ENCODE measurements at regions of chr3 and their contacts with region 1.

Region 1: DNA sequence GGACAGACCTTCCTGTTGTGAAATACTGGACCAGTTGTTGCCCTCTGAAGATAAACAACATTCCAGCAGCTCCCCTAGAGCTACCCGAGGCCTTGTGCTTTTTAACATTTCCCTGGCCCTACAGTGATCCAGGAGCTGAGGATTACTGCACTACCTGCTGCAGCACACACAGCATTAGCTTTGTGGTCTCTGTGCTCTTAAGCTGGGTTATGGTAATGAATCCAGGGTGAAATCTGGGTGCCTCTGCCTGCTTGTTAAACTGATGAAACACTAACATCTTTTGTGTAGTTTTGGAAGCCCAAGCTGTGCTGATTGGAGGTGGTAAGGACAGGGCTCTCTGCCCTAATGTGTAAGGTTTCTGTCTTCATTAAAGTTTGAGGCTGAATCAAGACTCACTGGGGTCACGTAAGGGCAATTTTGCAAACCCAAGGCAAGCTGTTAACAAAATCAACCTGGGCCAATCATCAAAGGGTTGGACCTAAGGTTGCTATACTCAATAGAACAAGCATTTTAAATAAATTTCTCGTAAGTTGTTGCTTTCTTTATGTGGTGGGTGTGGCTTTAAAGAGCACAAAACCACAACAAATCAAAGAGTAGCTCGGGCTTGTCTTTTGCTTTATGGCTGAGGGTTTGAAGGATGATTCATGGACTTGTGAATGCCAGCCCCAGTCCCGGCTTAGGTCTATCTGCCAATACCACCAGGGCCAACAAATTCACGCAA is 183.9 kb downstream of the TPRG1 start:
- DNase-seq: peak; percentile 93
- H3K4me3 Mint-ChIP-seq: no peak overlapping the region
- H3K27ac Mint-ChIP-seq: peak overlapping the region; percentile 96
- H3K4me1 Mint-ChIP-seq: peaks cover 36% of the 10 kb centered on the region
- H3K27me3 Mint-ChIP-seq: no peaks in the 10 kb centered on the region
- CTCF ChIP-seq: no peak

Region 2: GRCh38 chr3:189276481-189277219 is 79.0 kb before region 1 on chr3:
- CTCF ChIA-PET with region 1: interaction called, 56 read pairs
- POLR2A ChIA-PET with region 1: interaction called, 111 read pairs
- intact Hi-C with region 1: loop called (anchors 2 kb)
- DNase-seq: peak; percentile 95
- H3K4me3 Mint-ChIP-seq: peak overlapping the region; percentile 30
- H3K27ac Mint-ChIP-seq: peak overlapping the region; percentile 50
- H3K4me1 Mint-ChIP-seq: peaks cover 41% of the 10 kb centered on the region
- H3K27me3 Mint-ChIP-seq: no peaks in the 10 kb centered on the region
- CTCF ChIP-seq: no peak

Region 3: DNA sequence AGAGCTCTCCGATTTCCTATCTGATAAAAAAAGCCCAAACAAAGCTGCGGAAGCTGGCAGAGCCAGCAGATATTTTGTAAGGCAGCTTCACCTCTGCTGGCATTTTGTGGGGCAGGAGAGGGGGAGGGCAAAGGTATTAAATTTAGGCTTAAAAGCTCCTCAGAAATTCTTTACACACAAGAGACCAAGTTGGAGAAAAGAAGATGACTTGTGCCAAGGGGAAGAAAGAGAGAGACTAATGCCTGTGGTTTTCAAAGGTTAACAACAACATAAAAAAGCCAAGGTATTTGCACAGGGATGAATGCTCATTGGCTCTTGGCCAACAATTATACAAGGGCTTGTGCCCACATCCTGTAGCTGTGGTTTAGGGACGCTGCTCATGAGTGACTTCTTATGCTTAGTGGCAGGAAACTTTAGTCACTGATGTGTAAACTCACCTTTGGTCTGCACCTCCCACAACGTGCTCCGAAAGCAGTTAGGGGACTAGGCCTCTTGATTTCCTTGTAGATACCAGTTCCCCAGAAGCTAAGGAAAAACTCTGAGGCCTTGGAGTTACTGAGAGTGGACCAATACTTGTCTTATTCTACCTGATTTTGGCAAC is 31.0 kb before region 1 on chr3:
- CTCF ChIA-PET with region 1: interaction called, 4 read pairs
- POLR2A ChIA-PET with region 1: interaction called, 37 read pairs
- intact Hi-C with region 1: no loop called
- DNase-seq: peak; percentile 98
- H3K4me3 Mint-ChIP-seq: no peak overlapping the region
- H3K27ac Mint-ChIP-seq: peak overlapping the region; percentile 69
- H3K4me1 Mint-ChIP-seq: peaks cover 30% of the 10 kb centered on the region
- H3K27me3 Mint-ChIP-seq: no peaks in the 10 kb centered on the region
- CTCF ChIP-seq: no peak

Region 4: GRCh38 chr3:189458532-189458931 is 102.9 kb after region 1 on chr3:
- CTCF ChIA-PET with region 1: no interaction called
- POLR2A ChIA-PET with region 1: interaction called, 10 read pairs
- intact Hi-C with region 1: no loop called
- DNase-seq: peak; percentile 80
- H3K4me3 Mint-ChIP-seq: peak overlapping the region; percentile 26
- H3K27ac Mint-ChIP-seq: peak overlapping the region; percentile 70
- H3K4me1 Mint-ChIP-seq: peaks cover 29% of the 10 kb centered on the region
- H3K27me3 Mint-ChIP-seq: no peaks in the 10 kb centered on the region
- CTCF ChIP-seq: no peak

Region 5: DNA sequence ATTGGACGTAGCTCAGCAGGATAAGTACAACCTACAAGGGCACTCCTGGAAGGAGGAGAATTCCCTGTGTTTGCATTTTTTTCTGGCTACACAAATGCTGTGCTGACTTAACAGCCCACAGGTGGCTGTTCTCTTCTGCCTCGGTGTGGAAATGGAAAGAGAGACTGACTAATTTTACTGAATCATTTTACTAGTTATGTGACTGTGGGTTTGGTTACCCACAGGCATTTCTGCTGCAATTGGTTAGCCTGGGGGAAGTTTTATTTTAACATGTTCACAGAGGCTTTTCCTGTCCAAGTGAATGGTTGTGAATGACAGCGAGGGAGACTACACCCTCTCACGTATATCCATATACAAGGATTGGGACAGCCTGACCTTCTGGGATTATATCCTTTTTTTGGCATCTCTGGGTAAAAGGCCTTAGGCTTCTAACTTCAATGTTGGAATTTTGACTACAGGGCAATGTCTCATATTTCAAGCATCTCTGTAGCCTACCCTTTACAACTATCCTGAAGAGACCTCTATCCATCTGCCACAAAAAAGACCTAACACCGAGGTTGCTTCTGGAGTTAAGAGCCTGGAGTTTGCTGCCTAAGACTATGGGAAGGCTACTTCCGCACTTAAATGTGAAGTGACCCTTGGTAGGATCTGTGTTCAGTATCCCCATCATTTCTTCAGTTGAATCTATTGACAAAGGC is 208.4 kb after region 1 on chr3:
- CTCF ChIA-PET with region 1: interaction called, 3 read pairs
- POLR2A ChIA-PET with region 1: interaction called, 25 read pairs
- intact Hi-C with region 1: no loop called
- DNase-seq: peak; percentile 92
- H3K4me3 Mint-ChIP-seq: no peak overlapping the region
- H3K27ac Mint-ChIP-seq: peak overlapping the region; percentile 69
- H3K4me1 Mint-ChIP-seq: peaks cover 26% of the 10 kb centered on the region
- H3K27me3 Mint-ChIP-seq: no peaks in the 10 kb centered on the region
- CTCF ChIP-seq: no peak

Region 6: GRCh38 chr3:189792101-189792500 is 436.5 kb after region 1 on chr3:
- CTCF ChIA-PET with region 1: no interaction called
- POLR2A ChIA-PET with region 1: interaction called, 15 read pairs
- intact Hi-C with region 1: no loop called
- DNase-seq: peak; percentile 59
- H3K4me3 Mint-ChIP-seq: peak overlapping the region; percentile 76
- H3K27ac Mint-ChIP-seq: peak overlapping the region; percentile 99
- H3K4me1 Mint-ChIP-seq: peaks cover 19% of the 10 kb centered on the region
- H3K27me3 Mint-ChIP-seq: no peaks in the 10 kb centered on the region
- CTCF ChIP-seq: no peak